Activated naive CD4-positive, alpha-beta T cell treated with anti-CD3 and anti-CD28 coated beads for 36 hours (primary cell): ENCODE measurements at regions of chr17 and their contacts with region 1.

Region 1: DNA sequence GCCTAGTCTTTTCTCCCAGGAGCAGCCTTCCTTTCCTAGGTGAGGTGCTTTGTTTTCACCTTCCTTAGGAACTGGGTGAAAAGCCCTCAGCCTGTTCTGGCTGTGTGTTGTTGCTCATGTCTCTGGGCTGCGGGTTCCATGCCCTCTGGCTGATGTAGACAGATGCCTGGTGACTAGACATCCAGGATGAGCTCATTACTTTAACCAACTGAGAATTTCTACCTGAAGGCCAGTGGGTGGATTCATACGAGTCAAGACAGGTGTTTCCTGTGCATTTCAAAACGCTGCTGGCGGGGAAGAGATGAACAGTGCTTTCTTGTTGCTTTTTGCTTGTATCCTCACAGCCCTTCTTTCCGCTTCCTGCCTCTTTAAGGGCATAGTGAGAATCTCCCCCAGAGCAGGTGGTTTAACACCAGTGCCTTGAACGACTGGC is 22.3 kb downstream of the SAP30BP start:
- DNase-seq: peak; percentile 81
- H3K4me3 Mint-ChIP-seq: no peak overlapping the region
- H3K27ac Mint-ChIP-seq: peak overlapping the region; percentile 92
- H3K4me1 Mint-ChIP-seq: peaks cover 59% of the 10 kb centered on the region
- H3K27me3 Mint-ChIP-seq: no peaks in the 10 kb centered on the region

Region 2: GRCh38 chr17:75619506-75620431 is 69.7 kb before region 1 on chr17:
- CTCF ChIA-PET with region 1: no interaction called
- intact Hi-C with region 1: no loop called
- DNase-seq: peak; percentile 38
- H3K4me3 Mint-ChIP-seq: no peak overlapping the region
- H3K27ac Mint-ChIP-seq: no peak overlapping the region
- H3K4me1 Mint-ChIP-seq: no peaks in the 10 kb centered on the region
- H3K27me3 Mint-ChIP-seq: no peaks in the 10 kb centered on the region

Region 3: GRCh38 chr17:75667021-75667790 is 22.3 kb before region 1 on chr17 and contains the starts of genes RECQL5 and SAP30BP:
- CTCF ChIA-PET with region 1: no interaction called
- intact Hi-C with region 1: loop called (anchors 1 kb)
- DNase-seq: peak; percentile 99
- H3K4me3 Mint-ChIP-seq: peak within 1 kb of the TSS; percentile 64
- H3K27ac Mint-ChIP-seq: no peak within 1 kb of the TSS
- H3K4me1 Mint-ChIP-seq: peaks cover 35% of the 10 kb centered on the region
- H3K27me3 Mint-ChIP-seq: no peaks in the 10 kb centered on the region
- total RNA-seq, gene RECQL5: 36.2 to 44.0 TPM
- total RNA-seq, gene SAP30BP: 68.3 TPM

Region 4: DNA sequence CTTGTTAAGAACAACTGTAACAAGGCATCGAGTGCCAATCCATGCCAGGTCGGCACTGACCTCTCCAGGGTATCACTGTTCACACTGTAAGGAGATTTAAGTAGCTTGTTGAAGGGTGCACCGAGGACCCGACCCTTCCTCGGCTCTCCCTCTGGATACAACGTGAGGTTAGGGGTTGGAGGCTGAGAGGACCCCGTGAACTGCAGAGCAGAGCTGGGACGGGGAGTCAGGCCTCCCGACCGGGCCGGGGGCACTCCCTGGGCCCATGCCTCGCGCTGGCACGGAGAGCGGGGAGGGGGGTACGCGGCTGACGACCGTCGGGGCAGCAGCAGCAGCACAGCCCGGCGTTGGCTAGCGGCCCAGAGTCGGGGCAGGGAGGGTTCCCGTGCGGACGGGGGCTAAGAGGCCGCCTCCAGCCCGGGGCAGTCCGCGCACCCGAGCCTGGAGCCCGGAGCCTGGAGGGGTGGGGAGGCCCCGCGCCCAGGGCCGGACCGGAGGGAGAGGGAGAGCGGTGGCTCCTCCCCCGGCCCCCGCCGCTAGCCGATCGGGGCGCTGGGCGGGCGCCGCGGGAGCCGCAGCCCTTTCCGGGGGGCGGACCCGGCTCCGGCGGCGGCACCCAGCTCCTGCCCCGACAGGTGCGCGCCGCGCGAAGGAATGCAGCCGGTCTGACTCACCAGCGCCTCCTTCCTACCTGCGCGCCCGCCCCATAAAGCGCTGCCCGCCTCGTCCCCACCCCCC is 31.4 kb after region 1 on chr17 and contains the start of gene ITGB4:
- CTCF ChIA-PET with region 1: no interaction called
- intact Hi-C with region 1: loop called (anchors 5 kb)
- DNase-seq: peak; percentile 68
- H3K4me3 Mint-ChIP-seq: peak within 1 kb of the TSS; percentile 67
- H3K27ac Mint-ChIP-seq: no peak within 1 kb of the TSS
- H3K4me1 Mint-ChIP-seq: peaks cover 2% of the 10 kb centered on the region
- H3K27me3 Mint-ChIP-seq: peaks cover 6% of the 10 kb centered on the region
- total RNA-seq, gene ITGB4: 0.83 to 1.0 TPM